Activated T-helper 1 cell treated with anti-CD3 and anti-CD28 coated beads, Interleukin-12 subunit alpha, Interleukin-12 subunit beta, Interleukin-2, Interleukin-4 antibody, amounts not matched to agents 30 ng/mL and 10 ng/mL and 1 ng/mL, durations not matched to agents 14 hours and 24 hours and 36 hours (primary cell): ENCODE measurements at regions of chr4 and their contacts with region 1.

Region 1: DNA sequence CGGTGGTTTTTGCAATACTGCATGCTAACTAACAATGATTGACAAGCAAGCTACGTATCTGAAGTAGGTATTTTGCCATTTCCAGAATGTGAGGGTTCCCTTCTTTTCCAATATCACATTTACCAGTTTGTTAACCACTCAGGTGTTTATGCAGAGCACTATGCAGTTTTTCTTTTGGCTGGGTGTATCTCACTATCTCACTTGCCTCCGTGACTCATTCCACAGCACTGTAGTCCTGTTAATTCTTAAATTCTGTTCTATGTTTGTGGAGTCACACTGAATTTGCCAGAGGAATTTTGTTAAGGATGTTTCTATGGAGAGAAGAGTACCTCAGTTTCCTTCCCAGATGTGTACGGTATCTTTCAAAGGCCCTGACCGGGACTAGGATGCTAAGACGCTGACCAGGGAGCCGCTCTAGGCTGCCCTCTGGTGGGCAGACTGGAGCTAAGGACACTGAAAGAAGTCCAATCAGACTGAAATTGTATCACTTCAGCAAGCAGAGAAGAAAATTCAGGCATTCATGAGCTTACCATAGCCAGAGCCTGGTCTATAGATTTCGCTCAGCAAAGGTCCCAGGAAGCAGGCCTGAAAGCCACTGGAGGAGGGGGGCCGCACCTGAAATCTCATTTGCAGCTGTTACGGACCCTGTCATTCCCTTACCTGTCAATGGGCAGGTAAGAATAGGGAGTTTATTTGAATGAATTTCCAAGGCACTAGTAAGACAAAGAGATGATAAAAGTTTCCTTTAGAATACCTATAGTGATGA is 388.4 kb upstream of the SPOCK3 start:
- DNase-seq: peak; percentile 5
- H3K4me3 Mint-ChIP-seq: no peak overlapping the region
- H3K27ac Mint-ChIP-seq: no peak overlapping the region
- H3K4me1 Mint-ChIP-seq: no peaks in the 10 kb centered on the region
- H3K27me3 Mint-ChIP-seq: no peaks in the 10 kb centered on the region

Region 2: GRCh38 chr4:167544391-167544790 is 78.3 kb before region 1 on chr4:
- intact Hi-C with region 1: no loop called
- DNase-seq: no peak
- H3K4me3 Mint-ChIP-seq: no peak overlapping the region
- H3K27ac Mint-ChIP-seq: no peak overlapping the region
- H3K4me1 Mint-ChIP-seq: no peaks in the 10 kb centered on the region
- H3K27me3 Mint-ChIP-seq: no peaks in the 10 kb centered on the region

Region 3: GRCh38 chr4:168153596-168154440 is 531.2 kb after region 1 on chr4:
- intact Hi-C with region 1: loop called (anchors 5 kb)
- DNase-seq: peak; percentile 14
- H3K4me3 Mint-ChIP-seq: no peak overlapping the region
- H3K27ac Mint-ChIP-seq: no peak overlapping the region
- H3K4me1 Mint-ChIP-seq: peaks cover 8% of the 10 kb centered on the region
- H3K27me3 Mint-ChIP-seq: no peaks in the 10 kb centered on the region